A673 (cell line): ENCODE measurements at regions of chr5 and their contacts with region 1.

Region 1: DNA sequence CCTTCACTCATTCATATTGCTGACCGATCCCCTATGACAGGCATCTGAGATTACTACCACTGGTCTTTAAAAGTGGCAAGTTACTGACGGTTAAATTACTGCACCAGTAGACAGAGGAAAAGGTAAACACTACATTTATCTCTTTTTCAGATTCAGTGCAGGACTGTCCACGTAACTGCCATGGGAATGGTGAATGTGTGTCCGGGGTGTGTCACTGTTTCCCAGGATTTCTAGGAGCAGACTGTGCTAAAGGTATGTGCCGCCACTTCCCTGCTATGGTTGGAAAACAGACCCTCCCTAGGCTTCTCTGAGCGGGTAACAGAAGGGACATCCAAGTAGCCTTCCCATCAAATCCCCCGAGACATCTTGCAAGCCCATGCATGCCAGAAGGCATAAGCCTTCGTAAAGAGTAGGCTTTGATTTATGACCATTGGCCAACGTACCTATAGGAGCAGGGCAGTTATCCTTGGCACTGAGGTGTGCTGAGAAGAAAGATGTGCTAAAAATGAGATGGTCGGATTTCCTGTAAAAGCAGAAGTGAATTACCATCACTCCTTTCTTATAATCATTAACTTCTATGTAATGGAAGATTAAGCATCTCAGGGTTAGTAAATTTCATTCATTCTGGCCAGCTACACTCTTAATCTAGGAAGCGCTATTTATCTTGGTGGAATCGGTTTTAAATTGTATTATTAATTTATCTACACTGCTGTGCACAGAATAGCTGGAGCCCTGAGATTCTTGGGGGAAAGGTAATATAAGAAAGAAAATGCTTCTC is 193.4 kb upstream of the WWC1 start:
- DNase-seq: no peak
- H3K4me3 ChIP-seq: no peak overlapping the region
- H3K27ac ChIP-seq: no peak overlapping the region
- H3K4me1 ChIP-seq: no peaks in the 10 kb centered on the region
- H3K27me3 ChIP-seq: no peaks in the 10 kb centered on the region
- CTCF ChIP-seq: no peak

Region 2: GRCh38 chr5:168147568-168148360 is 49.7 kb after region 1 on chr5:
- CTCF ChIA-PET with region 1: no interaction called
- POLR2A ChIA-PET with region 1: no interaction called
- intact Hi-C with region 1: no loop called
- DNase-seq: no peak
- H3K4me3 ChIP-seq: no peak overlapping the region
- H3K27ac ChIP-seq: no peak overlapping the region
- H3K4me1 ChIP-seq: no peaks in the 10 kb centered on the region
- H3K27me3 ChIP-seq: no peaks in the 10 kb centered on the region
- CTCF ChIP-seq: no peak

Region 3: DNA sequence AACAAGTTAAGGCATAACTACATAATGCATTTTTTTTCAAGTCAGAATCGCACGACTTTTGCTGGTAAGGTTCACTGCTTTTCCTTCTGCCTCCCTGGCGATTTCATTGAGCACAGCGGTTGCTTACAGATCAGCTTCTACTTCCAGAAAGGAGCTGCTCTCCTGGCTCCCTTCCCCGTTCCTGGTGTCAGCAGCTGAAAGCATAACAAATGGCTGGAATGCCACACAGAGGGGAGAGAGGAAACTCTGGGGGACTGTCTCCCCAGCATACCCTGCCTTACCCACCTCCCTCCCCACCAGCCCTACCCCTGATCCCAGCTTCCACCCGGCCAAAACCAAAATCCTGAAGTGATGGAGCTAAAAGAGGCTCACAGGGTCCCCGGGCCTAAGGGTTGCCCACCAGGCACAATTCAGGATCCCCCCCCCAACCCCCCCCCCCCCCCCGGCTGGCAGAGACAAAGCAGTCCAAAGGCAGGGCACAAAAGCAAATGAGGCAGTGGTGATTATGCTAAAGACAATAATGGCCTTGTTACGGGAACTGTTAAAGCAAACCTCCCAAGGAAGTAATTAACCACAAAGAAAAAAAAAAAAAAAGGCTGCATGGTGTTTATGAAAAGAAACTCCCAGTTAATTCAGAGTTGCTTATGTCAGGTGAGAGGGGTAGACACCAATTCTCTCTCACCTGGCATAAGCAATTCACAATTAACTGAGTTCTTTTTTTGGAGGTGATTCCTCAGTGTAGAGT is 67.3 kb after region 1 on chr5:
- CTCF ChIA-PET with region 1: no interaction called
- POLR2A ChIA-PET with region 1: interaction called, 14 read pairs
- intact Hi-C with region 1: no loop called
- DNase-seq: peak; percentile 17
- H3K4me3 ChIP-seq: no peak overlapping the region
- H3K27ac ChIP-seq: peak overlapping the region; percentile 44
- H3K4me1 ChIP-seq: peaks cover 7% of the 10 kb centered on the region
- H3K27me3 ChIP-seq: no peaks in the 10 kb centered on the region
- CTCF ChIP-seq: no peak